ENCODE measurements at regions of chr9 and their contacts with region 1.

Region 1: DNA sequence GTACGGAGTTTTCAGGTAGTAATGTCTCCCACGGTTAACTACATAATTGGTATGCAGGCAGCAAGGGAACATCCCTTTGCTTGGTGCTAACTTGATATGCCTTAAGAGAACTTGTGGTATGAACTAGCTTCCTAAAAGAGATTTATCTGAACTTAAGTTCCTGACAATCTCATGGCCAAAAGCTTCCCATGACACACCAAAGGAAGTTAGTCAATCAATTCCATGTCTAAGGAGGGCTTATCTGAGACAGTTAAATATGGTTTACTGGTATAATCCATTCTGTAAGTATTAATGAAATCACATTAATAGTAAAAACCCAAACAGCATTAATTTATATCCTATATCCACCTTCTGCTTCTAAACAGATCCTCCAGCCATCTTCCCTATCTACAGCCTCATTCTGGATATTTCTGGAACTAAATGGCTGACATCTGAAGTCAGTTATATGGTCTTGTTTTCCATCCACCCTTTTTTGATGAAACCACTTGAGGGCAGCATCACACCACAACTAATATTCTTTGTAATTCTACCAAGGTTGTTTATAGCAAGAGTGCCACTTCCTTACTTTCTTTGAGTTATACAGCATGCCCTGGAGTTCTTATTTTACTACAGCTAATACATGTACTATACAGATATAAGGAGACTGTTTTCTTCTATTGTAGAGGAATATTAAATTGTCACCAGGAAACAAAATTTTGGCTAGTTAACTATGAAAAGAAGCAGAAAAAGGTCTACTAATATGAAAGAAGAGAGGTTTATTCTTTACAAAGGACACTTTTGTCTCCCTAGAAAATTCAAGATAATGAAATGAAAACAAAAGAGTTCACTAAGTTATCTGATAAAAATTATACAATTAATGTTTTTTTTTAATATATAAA is 34.7 kb downstream of the SHOC1 start:
- DNase-seq: peak; percentile 91
- ATAC-seq: peak; percentile 95
- H3K4me3 ChIP-seq: no peak overlapping the region
- H3K27ac ChIP-seq: peak overlapping the region; percentile 24; the same call in 1 of the 2 replicates
- H3K4me1 ChIP-seq: peaks cover 3% of the 10 kb centered on the region; the same call in 1 of the 2 replicates
- H3K27me3 ChIP-seq: no peaks in the 10 kb centered on the region
- CTCF ChIP-seq: peak; percentile 83
- POLR2A ChIP-seq: no peak
- RAD21 ChIP-seq: peak; percentile 90

Region 2: GRCh38 chr9:111839388-111839787 is 79.4 kb after region 1 on chr9:
- CTCF ChIA-PET with region 1: no interaction called
- POLR2A ChIA-PET with region 1: no interaction called
- dilution Hi-C with region 1: no loop called
- in situ Hi-C with region 1: no loop called
- intact Hi-C with region 1: no loop called
- DNase-seq: peak; percentile 49
- ATAC-seq: peak; percentile 79
- H3K4me3 ChIP-seq: no peak overlapping the region
- H3K27ac ChIP-seq: peak overlapping the region; percentile 57
- H3K4me1 ChIP-seq: no peaks in the 10 kb centered on the region; the same call in 1 of the 2 replicates
- H3K27me3 ChIP-seq: no peaks in the 10 kb centered on the region
- CTCF ChIP-seq: no peak
- POLR2A ChIP-seq: no peak
- RAD21 ChIP-seq: no peak

Region 3: GRCh38 chr9:111909441-111909840 is 149.4 kb after region 1 on chr9:
- CTCF ChIA-PET with region 1: no interaction called
- POLR2A ChIA-PET with region 1: no interaction called
- dilution Hi-C with region 1: no loop called
- in situ Hi-C with region 1: no loop called
- intact Hi-C with region 1: no loop called
- DNase-seq: no peak
- ATAC-seq: no peak
- H3K4me3 ChIP-seq: no peak overlapping the region
- H3K27ac ChIP-seq: no peak overlapping the region
- H3K4me1 ChIP-seq: peaks cover 28% of the 10 kb centered on the region
- H3K27me3 ChIP-seq: no peaks in the 10 kb centered on the region
- CTCF ChIP-seq: no peak
- POLR2A ChIP-seq: no peak
- RAD21 ChIP-seq: no peak

Region 4: DNA sequence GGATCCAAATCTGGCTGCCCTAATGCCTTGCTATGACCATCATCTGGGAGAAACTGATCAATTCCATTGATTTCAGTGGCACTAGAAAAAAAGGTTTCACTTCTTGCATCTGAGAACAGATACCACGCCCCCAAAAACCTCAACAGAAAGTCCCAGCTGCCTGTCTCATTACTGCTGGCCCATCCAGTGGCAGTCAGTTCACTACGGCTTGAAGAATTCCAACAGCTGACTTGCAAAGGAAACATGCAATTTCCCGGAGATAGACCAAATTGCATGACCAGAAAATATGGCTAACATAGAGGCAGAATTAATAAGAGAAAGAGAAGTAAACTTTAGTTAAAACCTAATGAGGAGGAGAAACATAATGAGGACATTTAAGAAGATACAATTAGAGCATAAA is 185.2 kb after region 1 on chr9:
- CTCF ChIA-PET with region 1: no interaction called
- POLR2A ChIA-PET with region 1: no interaction called
- dilution Hi-C with region 1: no loop called
- in situ Hi-C with region 1: no loop called
- intact Hi-C with region 1: loop called (anchors 5 kb)
- DNase-seq: peak; percentile 83
- ATAC-seq: 0 out of 2 replicates have a peak, but pooled peaks have one; percentile 15
- H3K4me3 ChIP-seq: no peak overlapping the region
- H3K27ac ChIP-seq: no peak overlapping the region
- H3K4me1 ChIP-seq: peaks cover 10% of the 10 kb centered on the region
- H3K27me3 ChIP-seq: no peaks in the 10 kb centered on the region
- CTCF ChIP-seq: no peak
- POLR2A ChIP-seq: no peak
- RAD21 ChIP-seq: no peak